Natural killer cell (primary cell): ENCODE measurements at regions of chr2 and their contacts with region 1.

Region 1: DNA sequence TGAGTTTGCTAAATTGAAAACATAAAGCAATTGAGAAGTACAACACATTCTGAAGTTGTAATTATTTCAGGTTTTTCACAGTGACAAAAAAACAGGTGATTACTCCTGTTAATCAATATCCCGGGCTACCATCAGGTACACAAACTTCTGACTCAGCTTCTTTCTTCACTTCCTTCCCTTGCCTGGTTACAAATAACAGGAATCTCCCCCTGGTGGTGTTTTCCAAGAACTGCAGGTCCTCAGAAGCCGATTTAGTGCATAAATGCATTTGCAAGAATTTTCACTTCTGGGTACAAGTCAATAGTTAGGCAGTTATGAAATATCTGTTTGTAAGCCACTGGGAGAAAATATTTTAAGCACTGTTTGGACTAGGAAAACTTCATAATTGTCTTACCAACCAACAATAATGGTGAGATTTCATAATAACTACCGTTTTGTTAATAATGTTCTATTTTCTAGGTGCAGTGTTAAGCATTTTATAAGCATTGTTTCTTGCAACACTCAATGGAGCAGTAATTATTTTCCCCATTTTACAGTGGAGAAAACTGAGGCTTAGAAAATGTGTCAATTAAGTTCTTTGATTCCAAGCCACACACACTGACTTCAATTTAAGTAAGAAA is 12.4 kb upstream of the GMCL1 start:
- DNase-seq: peak; percentile 44 to 88
- ATAC-seq: peak; percentile 79 to 99 (median 85)
- H3K4me3 ChIP-seq: no peak overlapping the region
- H3K4me3 Mint-ChIP-seq: no peak overlapping the region
- H3K27ac ChIP-seq: no peak overlapping the region
- H3K27ac Mint-ChIP-seq: no peak overlapping the region
- H3K4me1 ChIP-seq: no peaks in the 10 kb centered on the region
- H3K4me1 Mint-ChIP-seq: peaks cover 0 to 5% of the 10 kb centered on the region in 2 donors
- H3K27me3 ChIP-seq: no peaks in the 10 kb centered on the region
- H3K27me3 Mint-ChIP-seq: no peaks in the 10 kb centered on the region
- CTCF ChIP-seq: peak; percentile 88

Region 2: DNA sequence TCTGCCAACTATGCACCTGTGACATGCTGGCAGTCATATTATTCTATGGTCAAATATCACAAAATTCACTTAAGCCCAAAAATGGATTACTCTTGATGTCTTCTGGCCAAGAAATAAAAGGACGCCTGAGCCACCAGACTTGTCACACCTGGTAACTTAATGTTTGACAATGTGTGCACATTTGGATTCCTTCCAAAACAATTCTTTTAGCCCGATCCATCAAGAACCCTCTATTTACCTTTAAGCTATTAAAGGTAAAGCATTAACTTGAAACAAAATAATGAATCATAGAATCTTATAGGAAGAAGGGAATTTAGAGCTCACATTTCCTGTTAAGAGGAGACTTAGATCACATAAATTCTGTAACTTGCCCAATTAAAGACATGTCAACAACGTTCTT is 333.3 kb before region 1 on chr2:
- intact Hi-C with region 1: no loop called
- DNase-seq: no peak
- ATAC-seq: no peak
- H3K4me3 ChIP-seq: no peak overlapping the region
- H3K4me3 Mint-ChIP-seq: no peak overlapping the region
- H3K27ac ChIP-seq: no peak overlapping the region
- H3K27ac Mint-ChIP-seq: peak overlapping the region; percentile 32 to 46
- H3K4me1 ChIP-seq: peaks cover 7% of the 10 kb centered on the region
- H3K4me1 Mint-ChIP-seq: peaks cover 11 to 14% of the 10 kb centered on the region in 2 donors
- H3K27me3 ChIP-seq: no peaks in the 10 kb centered on the region
- H3K27me3 Mint-ChIP-seq: no peaks in the 10 kb centered on the region
- CTCF ChIP-seq: no peak

Region 3: GRCh38 chr2:69709290-69709689 is 107.7 kb before region 1 on chr2:
- intact Hi-C with region 1: no loop called
- DNase-seq: no peak
- ATAC-seq: no peak
- H3K4me3 ChIP-seq: no peak overlapping the region
- H3K4me3 Mint-ChIP-seq: no peak overlapping the region
- H3K27ac ChIP-seq: no peak overlapping the region
- H3K27ac Mint-ChIP-seq: no peak overlapping the region
- H3K4me1 ChIP-seq: peaks cover 2% of the 10 kb centered on the region
- H3K4me1 Mint-ChIP-seq: peaks cover 0 to 8% of the 10 kb centered on the region in 2 donors
- H3K27me3 ChIP-seq: no peaks in the 10 kb centered on the region
- H3K27me3 Mint-ChIP-seq: no peaks in the 10 kb centered on the region
- CTCF ChIP-seq: no peak

Region 4: DNA sequence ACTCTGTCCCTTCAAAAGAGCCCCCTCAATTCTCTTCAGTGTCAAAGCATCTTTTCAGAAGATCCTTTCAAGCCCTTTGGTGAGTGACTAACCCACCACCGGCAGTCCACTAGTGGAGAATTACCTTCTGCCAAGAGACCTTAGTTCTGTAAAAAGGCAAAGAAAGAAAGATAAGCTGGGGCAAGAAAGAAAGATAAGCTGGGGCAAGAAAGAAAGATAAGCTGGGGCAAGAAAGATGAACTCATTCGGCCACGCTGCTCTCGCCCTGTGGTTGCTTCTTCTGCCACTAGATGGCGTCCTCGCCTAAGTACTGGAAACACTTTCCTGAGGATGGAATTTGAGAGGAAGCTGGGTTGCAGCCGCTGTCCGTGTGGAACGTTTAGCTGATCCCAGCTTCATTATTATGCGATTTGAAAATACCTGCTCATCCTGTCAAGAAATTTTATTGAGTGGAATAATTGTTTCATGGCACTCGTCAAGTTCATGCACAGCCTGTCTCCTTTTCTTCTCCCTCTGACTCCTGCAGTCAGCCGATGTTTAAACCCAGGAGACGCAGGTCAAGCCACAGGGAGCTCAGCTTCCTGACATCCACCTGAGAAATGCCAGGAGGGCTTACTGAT is 92.4 kb before region 1 on chr2:
- intact Hi-C with region 1: loop called (anchors 1 kb)
- DNase-seq: peak; percentile 85 to 91
- ATAC-seq: peak; percentile 87 to 99 (median 96)
- H3K4me3 ChIP-seq: no peak overlapping the region
- H3K4me3 Mint-ChIP-seq: peak overlapping the region; percentile 72
- H3K27ac ChIP-seq: no peak overlapping the region
- H3K27ac Mint-ChIP-seq: peak overlapping the region in 1 of 2 donors; percentile 58
- H3K4me1 ChIP-seq: peaks cover 5% of the 10 kb centered on the region
- H3K4me1 Mint-ChIP-seq: peaks cover 6 to 8% of the 10 kb centered on the region in 2 donors
- H3K27me3 ChIP-seq: no peaks in the 10 kb centered on the region
- H3K27me3 Mint-ChIP-seq: no peaks in the 10 kb centered on the region
- CTCF ChIP-seq: peak; percentile 96

Region 5: DNA sequence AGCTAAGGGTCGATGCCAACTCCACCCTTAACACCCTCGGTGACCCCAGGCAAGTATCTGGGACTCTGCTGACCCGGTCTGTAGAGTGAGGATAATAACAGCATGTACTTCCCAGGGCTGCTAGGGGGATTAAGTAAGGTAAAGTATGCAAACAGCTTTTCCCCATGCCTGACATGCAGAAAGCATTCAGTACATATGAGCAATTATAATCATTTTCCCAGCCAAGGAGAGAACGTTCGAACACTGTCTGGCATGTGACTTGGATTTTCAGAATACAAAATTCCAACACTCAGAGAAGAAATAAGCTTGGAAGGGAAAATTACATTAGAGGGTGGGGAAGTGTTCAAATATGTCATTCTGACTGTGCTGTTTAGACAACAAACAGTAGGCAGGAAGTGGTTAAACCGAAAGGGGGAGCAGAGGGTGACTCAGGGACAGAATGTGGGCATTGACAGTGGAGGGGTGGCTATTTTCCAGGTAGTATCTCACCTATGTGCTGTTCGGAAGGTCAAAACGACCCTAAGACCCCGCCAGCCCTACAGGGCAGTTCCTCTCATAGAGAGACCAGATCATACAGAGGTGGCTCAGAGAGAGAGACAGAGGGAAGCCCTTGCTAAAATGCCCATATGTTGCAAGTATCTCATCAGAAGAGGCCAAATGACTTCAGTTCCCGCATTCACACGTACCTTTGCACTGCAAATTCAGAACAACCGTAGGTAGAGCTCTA is 129.5 kb after region 1 on chr2:
- intact Hi-C with region 1: no loop called
- DNase-seq: peak; percentile 52 to 75
- ATAC-seq: peak; percentile 87
- H3K4me3 ChIP-seq: no peak overlapping the region
- H3K4me3 Mint-ChIP-seq: peak overlapping the region; percentile 82
- H3K27ac ChIP-seq: peak overlapping the region; percentile 49
- H3K27ac Mint-ChIP-seq: peak overlapping the region; percentile 78 to 91
- H3K4me1 ChIP-seq: peaks cover 36% of the 10 kb centered on the region
- H3K4me1 Mint-ChIP-seq: peaks cover 34 to 42% of the 10 kb centered on the region in 2 donors
- H3K27me3 ChIP-seq: no peaks in the 10 kb centered on the region
- H3K27me3 Mint-ChIP-seq: no peaks in the 10 kb centered on the region
- CTCF ChIP-seq: no peak

Region 6: DNA sequence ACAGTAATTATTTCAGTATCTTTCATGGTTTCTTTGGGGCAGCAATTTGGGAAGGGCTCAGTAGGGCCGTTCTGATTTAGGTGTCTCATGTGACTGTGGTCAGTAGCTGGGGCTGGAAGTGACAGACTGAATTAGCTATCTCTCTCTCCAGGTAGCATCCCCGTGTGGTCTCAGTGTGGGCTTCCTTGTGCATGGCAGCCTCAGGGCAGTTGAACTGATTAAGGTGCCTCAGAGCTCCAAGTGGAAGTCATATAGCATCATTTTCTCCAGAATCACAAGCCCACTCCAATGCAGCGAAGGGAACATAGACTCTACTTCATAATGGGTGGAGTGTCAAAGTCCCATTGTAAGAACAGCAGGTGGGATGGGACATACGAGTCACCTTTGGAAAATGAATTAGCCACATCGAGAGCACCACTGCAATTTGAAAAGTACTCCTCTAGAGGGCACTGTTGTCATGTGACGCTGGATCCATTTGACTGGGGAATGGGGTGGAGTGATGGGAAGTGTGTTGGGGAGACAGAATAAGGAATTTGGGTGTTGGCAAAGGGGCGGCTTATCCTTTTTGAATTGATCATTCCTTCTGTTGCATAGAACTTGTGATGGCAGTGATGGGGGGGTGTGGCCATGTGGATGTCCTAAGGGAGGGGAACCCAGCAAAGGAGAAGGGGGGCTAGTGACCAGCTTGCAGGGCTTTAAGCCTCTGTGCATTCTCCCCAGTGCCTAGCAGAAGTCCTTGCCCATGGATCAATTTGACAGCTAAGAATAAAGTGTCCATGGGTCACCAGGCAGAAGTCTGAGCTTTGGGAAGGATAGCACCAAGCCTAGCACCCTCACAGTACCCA is 524.1 kb after region 1 on chr2:
- intact Hi-C with region 1: no loop called
- DNase-seq: peak; percentile 24 to 71
- ATAC-seq: peak; percentile 64 to 76 (median 68)
- H3K4me3 ChIP-seq: no peak overlapping the region
- H3K4me3 Mint-ChIP-seq: no peak overlapping the region
- H3K27ac ChIP-seq: no peak overlapping the region
- H3K27ac Mint-ChIP-seq: no peak overlapping the region
- H3K4me1 ChIP-seq: no peaks in the 10 kb centered on the region
- H3K4me1 Mint-ChIP-seq: peaks cover 0 to 6% of the 10 kb centered on the region in 2 donors
- H3K27me3 ChIP-seq: no peaks in the 10 kb centered on the region
- H3K27me3 Mint-ChIP-seq: peaks cover 0 to 17% of the 10 kb centered on the region in 2 donors
- CTCF ChIP-seq: peak; percentile 77